ENCODE measurements at regions of chr11 and their contacts with region 1.

Region 1: GRCh38 chr11:10653926-10654810 is 39.4 kb downstream of the IRAG1 start:
- DNase-seq: no peak

Region 2: GRCh38 chr11:9732453-9732852 is 921.7 kb before region 1 on chr11:
- intact Hi-C with region 1: no loop called
- DNase-seq: no peak

Region 3: GRCh38 chr11:10314199-10315072 is 339.7 kb before region 1 on chr11:
- intact Hi-C with region 1: no loop called
- DNase-seq: no peak

Region 4: DNA sequence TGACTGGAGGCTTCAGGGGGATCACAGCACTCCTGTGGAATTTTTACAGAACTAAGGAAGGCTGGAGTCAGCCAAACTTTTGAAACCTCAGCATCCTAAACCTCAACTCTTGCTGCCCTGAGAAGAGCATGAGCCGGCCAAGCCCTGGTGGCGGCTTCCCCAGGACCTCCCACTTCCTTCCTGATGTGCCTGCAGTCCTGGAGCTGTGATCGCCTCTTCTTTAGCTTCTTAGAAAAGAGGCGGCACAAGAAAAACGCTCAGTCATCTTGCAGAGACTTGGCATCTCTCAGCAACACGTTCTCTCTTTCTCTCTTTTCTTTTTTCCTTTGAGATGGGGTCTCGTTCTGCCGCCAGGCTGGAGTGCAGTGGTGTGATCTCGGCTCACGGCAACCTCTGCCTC is 239.5 kb before region 1 on chr11:
- intact Hi-C with region 1: loop called (anchors 2 kb)
- DNase-seq: no peak

Region 5: DNA sequence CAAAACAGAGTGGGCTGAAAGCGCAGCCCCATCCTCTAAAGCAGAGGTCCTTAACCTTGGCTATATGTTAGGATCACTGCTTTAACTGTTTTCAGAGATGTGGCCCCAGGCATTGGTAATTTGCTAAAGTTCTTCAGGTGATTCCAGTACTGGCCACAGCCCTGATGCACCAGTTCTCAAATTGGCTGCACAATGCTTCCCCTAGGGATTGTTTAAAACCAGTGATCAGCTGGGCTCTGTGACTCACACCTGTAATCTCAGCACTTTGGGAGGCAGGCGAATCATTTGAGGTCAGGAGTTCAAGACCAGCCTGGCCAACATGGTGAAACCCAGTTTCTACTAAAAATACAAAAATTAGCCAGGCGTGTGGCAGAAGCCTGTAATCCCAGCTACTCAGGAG is 47.8 kb after region 1 on chr11:
- intact Hi-C with region 1: no loop called
- DNase-seq: no peak

Measured in cardiac septum (tissue), 1 donor.